ENCODE measurements at regions of chr19 and their contacts with region 1.

Region 1: DNA sequence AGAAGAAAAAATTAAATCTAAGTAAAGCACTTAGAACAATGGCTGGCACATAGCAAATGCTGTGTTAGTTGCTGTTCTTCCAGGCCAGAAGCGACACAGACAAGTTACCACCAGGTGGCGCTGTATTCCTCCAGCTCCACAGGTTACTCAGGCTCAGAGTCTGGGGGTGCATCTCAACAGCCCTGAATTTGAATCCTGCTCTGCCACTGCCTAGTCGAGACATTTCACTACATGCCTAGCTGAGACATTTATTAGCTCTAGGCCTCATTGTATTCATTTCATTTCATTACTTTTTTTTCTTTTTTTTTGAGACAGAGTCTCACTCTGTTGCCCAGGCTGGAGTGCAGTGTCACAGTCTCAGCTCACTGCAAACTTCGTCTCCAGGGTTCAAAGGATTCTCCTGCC is 16.4 kb upstream of the CYP2B6 start:
- DNase-seq: peak; percentile 61 to 90 (median 80)
- ATAC-seq: peak; percentile 72
- H3K4me3 ChIP-seq: no peak overlapping the region
- H3K4me3 Mint-ChIP-seq: no peak overlapping the region
- H3K27ac ChIP-seq: no peak overlapping the region
- H3K27ac Mint-ChIP-seq: no peak overlapping the region
- H3K4me1 ChIP-seq: peaks cover 22% of the 10 kb centered on the region
- H3K4me1 Mint-ChIP-seq: peaks cover 29% of the 10 kb centered on the region
- H3K27me3 ChIP-seq: no peaks in the 10 kb centered on the region
- H3K27me3 Mint-ChIP-seq: peaks cover 10% of the 10 kb centered on the region
- CTCF ChIP-seq: peak; percentile 92

Region 2: GRCh38 chr19:40933034-40933433 is 41.6 kb before region 1 on chr19:
- CTCF ChIA-PET with region 1: no interaction called
- POLR2A ChIA-PET with region 1: no interaction called
- intact Hi-C with region 1: no loop called
- DNase-seq: no peak
- ATAC-seq: no peak
- H3K4me3 ChIP-seq: no peak overlapping the region
- H3K4me3 Mint-ChIP-seq: no peak overlapping the region
- H3K27ac ChIP-seq: no peak overlapping the region
- H3K27ac Mint-ChIP-seq: no peak overlapping the region
- H3K4me1 ChIP-seq: no peaks in the 10 kb centered on the region
- H3K4me1 Mint-ChIP-seq: no peaks in the 10 kb centered on the region
- H3K27me3 ChIP-seq: no peaks in the 10 kb centered on the region
- H3K27me3 Mint-ChIP-seq: peaks cover 22% of the 10 kb centered on the region
- CTCF ChIP-seq: no peak

Region 3: GRCh38 chr19:41076286-41076685 is 101.7 kb after region 1 on chr19:
- CTCF ChIA-PET with region 1: no interaction called
- POLR2A ChIA-PET with region 1: no interaction called
- intact Hi-C with region 1: no loop called
- DNase-seq: no peak
- ATAC-seq: no peak
- H3K4me3 ChIP-seq: no peak overlapping the region
- H3K4me3 Mint-ChIP-seq: no peak overlapping the region
- H3K27ac ChIP-seq: no peak overlapping the region
- H3K27ac Mint-ChIP-seq: no peak overlapping the region
- H3K4me1 ChIP-seq: no peaks in the 10 kb centered on the region
- H3K4me1 Mint-ChIP-seq: no peaks in the 10 kb centered on the region
- H3K27me3 ChIP-seq: no peaks in the 10 kb centered on the region
- H3K27me3 Mint-ChIP-seq: peaks cover 26% of the 10 kb centered on the region
- CTCF ChIP-seq: no peak

Region 4: GRCh38 chr19:41123716-41124294 is 149.2 kb after region 1 on chr19:
- CTCF ChIA-PET with region 1: interaction called, 6 read pairs
- POLR2A ChIA-PET with region 1: interaction called, 4 read pairs
- intact Hi-C with region 1: loop called in 1 of 2 experiments (anchors 1 kb)
- DNase-seq: peak in 1 of 9 experiments; percentile 20
- ATAC-seq: no peak
- H3K4me3 ChIP-seq: no peak overlapping the region
- H3K4me3 Mint-ChIP-seq: no peak overlapping the region
- H3K27ac ChIP-seq: no peak overlapping the region
- H3K27ac Mint-ChIP-seq: peak overlapping the region; percentile 41
- H3K4me1 ChIP-seq: peaks cover 23% of the 10 kb centered on the region
- H3K4me1 Mint-ChIP-seq: peaks cover 44% of the 10 kb centered on the region
- H3K27me3 ChIP-seq: no peaks in the 10 kb centered on the region
- H3K27me3 Mint-ChIP-seq: no peaks in the 10 kb centered on the region
- CTCF ChIP-seq: no peak

Region 5: GRCh38 chr19:41588497-41589209 is 614.0 kb after region 1 on chr19:
- CTCF ChIA-PET with region 1: no interaction called
- POLR2A ChIA-PET with region 1: no interaction called
- intact Hi-C with region 1: loop called in 1 of 2 experiments (anchors 5 kb)
- DNase-seq: peak in 3 of 9 experiments; percentile 24 to 31 (median 26)
- ATAC-seq: no peak
- H3K4me3 ChIP-seq: no peak overlapping the region
- H3K4me3 Mint-ChIP-seq: no peak overlapping the region
- H3K27ac ChIP-seq: no peak overlapping the region
- H3K27ac Mint-ChIP-seq: no peak overlapping the region
- H3K4me1 ChIP-seq: no peaks in the 10 kb centered on the region
- H3K4me1 Mint-ChIP-seq: no peaks in the 10 kb centered on the region
- H3K27me3 ChIP-seq: no peaks in the 10 kb centered on the region
- H3K27me3 Mint-ChIP-seq: peaks cover 18% of the 10 kb centered on the region
- CTCF ChIP-seq: no peak